ENCODE measurements at regions of chr7 and their contacts with region 1.

Region 1: DNA sequence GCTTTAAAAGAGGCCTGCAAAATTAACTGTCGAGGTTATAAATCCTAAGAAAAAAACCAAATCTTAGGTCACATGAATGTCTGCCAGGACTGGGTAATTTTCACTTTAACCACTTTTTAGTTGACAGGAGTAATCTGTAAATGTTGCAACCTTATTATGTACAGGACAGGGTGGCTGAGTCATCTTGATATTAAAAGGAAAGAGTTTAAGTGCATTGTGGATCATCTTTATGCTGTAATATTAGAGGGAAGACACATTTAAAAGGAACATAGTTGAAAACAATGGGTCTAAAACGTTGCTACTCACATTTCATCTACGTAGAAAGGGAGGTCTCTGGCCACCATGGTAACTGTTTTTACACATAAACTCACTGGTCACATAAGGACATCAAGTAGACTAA is 115.5 kb downstream of the LSMEM1 start:
- DNase-seq: no peak
- ATAC-seq: peak; percentile 50 to 53
- H3K4me3 ChIP-seq: no peak overlapping the region
- H3K27ac ChIP-seq: no peak overlapping the region
- H3K4me1 ChIP-seq: peaks cover 0 to 10% of the 10 kb centered on the region in 2 donors
- H3K27me3 ChIP-seq: no peaks in the 10 kb centered on the region
- CTCF ChIP-seq: no peak
- POLR2A ChIP-seq: no peak

Region 2: GRCh38 chr7:112789817-112790585 is 193.7 kb after region 1 on chr7 and contains the start of gene TMEM168:
- in situ Hi-C with region 1: no loop called
- intact Hi-C with region 1: no loop called
- DNase-seq: peak; percentile 43 to 64
- ATAC-seq: peak; percentile 81 to 88
- H3K4me3 ChIP-seq: peak within 1 kb of the TSS; percentile 82 to 98 (median 94)
- H3K27ac ChIP-seq: peak within 1 kb of the TSS; percentile 83 to 90 (median 88)
- H3K4me1 ChIP-seq: peaks cover 8 to 20% of the 10 kb centered on the region in 2 donors
- H3K27me3 ChIP-seq: no peaks in the 10 kb centered on the region
- CTCF ChIP-seq: no peak
- POLR2A ChIP-seq: peak; percentile 28 to 32
- total RNA-seq, gene TMEM168: 6.0 to 10.9 (median 6.2) TPM

Region 3: GRCh38 chr7:113099284-113099919 is 503.1 kb after region 1 on chr7:
- in situ Hi-C with region 1: no loop called
- intact Hi-C with region 1: loop called (anchors 5 kb)
- DNase-seq: no peak
- ATAC-seq: no peak
- H3K4me3 ChIP-seq: no peak overlapping the region
- H3K27ac ChIP-seq: no peak overlapping the region
- H3K4me1 ChIP-seq: no peaks in the 10 kb centered on the region
- H3K27me3 ChIP-seq: no peaks in the 10 kb centered on the region
- CTCF ChIP-seq: no peak
- POLR2A ChIP-seq: no peak